ENCODE measurements at regions of chr3 and their contacts with region 1.

Region 1: GRCh38 chr3:23324745-23325144 is 121.6 kb downstream of the UBE2E2 start:
- DNase-seq: no peak
- H3K4me3 ChIP-seq: no peak overlapping the region
- CTCF ChIP-seq: no peak
- POLR2A ChIP-seq: no peak

Region 2: DNA sequence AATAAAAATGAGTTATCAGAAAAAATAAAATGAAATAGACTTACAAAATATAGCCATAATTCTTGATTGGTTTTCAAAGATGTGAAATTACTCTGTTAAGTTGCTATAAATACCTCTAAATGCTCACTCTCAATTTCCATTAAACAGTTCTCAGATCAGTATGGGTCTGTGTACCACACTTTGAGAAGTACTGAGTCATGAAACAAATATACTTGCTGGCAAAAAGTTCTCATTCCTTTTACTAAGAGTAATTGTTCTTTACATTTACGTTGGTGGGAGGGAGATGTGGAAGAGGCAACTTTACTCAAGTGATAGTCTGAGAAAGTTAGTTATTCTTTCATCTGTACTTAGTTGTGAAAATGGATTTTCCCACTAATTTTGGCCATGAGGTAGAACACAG is 1670.1 kb before region 1 on chr3:
- intact Hi-C with region 1: loop called (anchors 5 kb)
- DNase-seq: no peak
- H3K4me3 ChIP-seq: no peak overlapping the region
- CTCF ChIP-seq: no peak
- POLR2A ChIP-seq: no peak

Region 3: DNA sequence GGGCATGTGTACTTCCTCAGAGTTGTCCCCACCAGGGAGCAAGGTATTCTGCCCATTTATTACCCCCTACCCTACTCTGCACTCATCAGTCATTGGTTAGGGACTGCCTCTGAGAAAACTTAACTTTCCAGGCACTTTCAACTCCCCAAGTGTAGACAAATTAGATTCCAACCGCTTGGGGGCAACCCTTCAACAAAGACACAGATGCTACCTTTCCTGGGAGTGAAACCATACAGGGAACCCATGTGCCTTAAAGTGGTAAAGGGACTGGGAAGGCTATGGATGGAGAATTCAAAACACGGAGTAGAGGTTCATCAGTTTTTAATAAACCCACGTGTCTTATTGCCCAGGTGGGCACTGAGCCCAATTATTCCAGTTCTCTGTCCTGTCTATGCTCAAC is 141.0 kb before region 1 on chr3:
- intact Hi-C with region 1: no loop called
- DNase-seq: no peak
- H3K4me3 ChIP-seq: no peak overlapping the region
- CTCF ChIP-seq: no peak
- POLR2A ChIP-seq: no peak

Measured in lower leg skin (tissue), 4 donors.